ENCODE measurements at regions of chr10 and their contacts with region 1.

Region 1: DNA sequence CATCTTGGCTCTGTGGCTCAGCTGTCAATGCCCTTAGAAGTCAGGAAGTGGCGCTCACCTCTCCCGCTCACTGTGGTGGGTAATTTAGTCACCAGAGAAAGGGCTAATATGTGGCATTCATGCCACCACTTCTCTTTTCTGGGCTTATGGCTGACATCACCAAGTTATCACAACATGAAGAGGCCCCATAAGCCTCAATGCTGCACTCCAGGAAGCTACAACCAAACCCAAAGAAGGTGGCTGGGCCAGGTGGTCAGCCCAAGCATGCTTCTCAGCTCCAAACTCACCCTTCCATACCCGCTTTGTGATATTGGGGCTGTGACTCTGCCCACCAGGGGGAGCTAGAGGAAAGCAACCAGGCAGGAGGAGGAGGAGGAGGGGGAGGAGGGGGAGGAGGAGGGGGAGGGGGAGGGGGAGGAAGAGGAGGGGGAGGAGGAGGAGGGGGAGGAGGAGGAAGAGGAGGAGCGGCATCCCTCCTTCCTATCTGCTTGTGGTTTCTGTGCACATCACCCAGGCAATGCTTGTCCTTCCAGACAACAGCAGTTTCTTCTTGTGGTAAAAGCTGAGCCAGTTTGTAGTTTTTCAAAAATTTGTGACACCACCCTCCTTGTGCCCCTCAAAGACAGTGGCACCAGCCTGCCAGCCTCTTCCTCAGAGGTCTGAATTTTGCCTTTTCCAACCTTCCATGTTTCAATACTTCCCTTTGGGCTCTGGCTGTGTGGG is 42.1 kb downstream of the CYP26A1 start:
- DNase-seq: peak; percentile 88
- ATAC-seq: peak; percentile 93
- H3K4me3 Mint-ChIP-seq: no peak overlapping the region
- H3K27ac Mint-ChIP-seq: no peak overlapping the region
- H3K4me1 Mint-ChIP-seq: peaks cover 12% of the 10 kb centered on the region
- H3K27me3 Mint-ChIP-seq: peaks cover 15% of the 10 kb centered on the region
- CTCF ChIP-seq: peak; percentile 47; the same call in 1 of the 2 replicates

Region 2: DNA sequence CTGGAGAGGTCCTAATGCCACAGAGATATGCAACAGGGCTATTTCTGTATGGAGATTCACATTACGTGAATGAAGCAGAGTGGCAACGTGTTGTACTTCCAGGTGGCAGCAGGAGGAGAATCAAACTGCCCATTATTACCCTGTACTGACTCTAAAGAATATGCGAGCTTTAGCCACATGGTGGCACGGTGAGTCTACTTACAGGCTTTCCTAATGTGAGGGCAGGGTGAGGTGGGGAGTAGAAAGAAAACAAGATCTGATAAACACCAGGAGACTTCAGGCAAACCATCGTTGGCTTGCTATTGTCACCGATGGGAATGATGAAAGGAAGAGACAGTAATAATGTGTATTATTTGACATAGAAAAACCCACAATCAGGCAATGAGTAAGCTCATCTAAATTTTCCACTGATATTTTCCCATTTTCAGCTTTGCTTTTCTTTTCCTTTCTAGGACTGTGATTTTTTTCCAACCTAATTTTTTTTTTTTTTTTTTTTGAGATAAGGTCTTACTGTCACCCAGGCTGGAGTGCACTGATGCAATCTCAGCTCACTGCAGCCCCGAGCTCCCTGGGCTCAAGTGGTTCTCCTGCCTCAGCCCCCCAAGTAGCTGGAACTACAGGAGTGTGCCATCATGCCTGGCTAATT is 1027.9 kb before region 1 on chr10:
- CTCF ChIA-PET with region 1: no interaction called
- POLR2A ChIA-PET with region 1: no interaction called
- DNase-seq: peak; percentile 75
- ATAC-seq: peak; percentile 100
- H3K4me3 Mint-ChIP-seq: no peak overlapping the region
- H3K27ac Mint-ChIP-seq: peak overlapping the region; percentile 84
- H3K4me1 Mint-ChIP-seq: peaks cover 23% of the 10 kb centered on the region
- H3K27me3 Mint-ChIP-seq: no peaks in the 10 kb centered on the region
- CTCF ChIP-seq: peak; percentile 48

Region 3: GRCh38 chr10:93126484-93127052 is 10.7 kb after region 1 on chr10:
- CTCF ChIA-PET with region 1: interaction called, 20 read pairs
- POLR2A ChIA-PET with region 1: no interaction called
- DNase-seq: peak; percentile 34
- ATAC-seq: no peak
- H3K4me3 Mint-ChIP-seq: no peak overlapping the region
- H3K27ac Mint-ChIP-seq: no peak overlapping the region
- H3K4me1 Mint-ChIP-seq: peaks cover 2% of the 10 kb centered on the region; the same call in 1 of the 2 replicates
- H3K27me3 Mint-ChIP-seq: peaks cover 6% of the 10 kb centered on the region; the same call in 1 of the 2 replicates
- CTCF ChIP-seq: peak; percentile 84

Region 4: GRCh38 chr10:93206651-93207050 is 90.8 kb after region 1 on chr10:
- CTCF ChIA-PET with region 1: interaction called, 17 read pairs
- POLR2A ChIA-PET with region 1: no interaction called
- DNase-seq: peak; percentile 59
- ATAC-seq: peak; percentile 100
- H3K4me3 Mint-ChIP-seq: no peak overlapping the region
- H3K27ac Mint-ChIP-seq: no peak overlapping the region
- H3K4me1 Mint-ChIP-seq: peaks cover 4% of the 10 kb centered on the region; the same call in 1 of the 2 replicates
- H3K27me3 Mint-ChIP-seq: no peaks in the 10 kb centered on the region
- CTCF ChIP-seq: no peak

Region 5: GRCh38 chr10:93280699-93281366 is 165.0 kb after region 1 on chr10:
- CTCF ChIA-PET with region 1: interaction called, 25 read pairs
- POLR2A ChIA-PET with region 1: no interaction called
- DNase-seq: peak; percentile 89
- ATAC-seq: peak; percentile 90
- H3K4me3 Mint-ChIP-seq: peak overlapping the region; percentile 42
- H3K27ac Mint-ChIP-seq: peak overlapping the region; percentile 100
- H3K4me1 Mint-ChIP-seq: peaks cover 59% of the 10 kb centered on the region
- H3K27me3 Mint-ChIP-seq: peaks cover 52% of the 10 kb centered on the region
- CTCF ChIP-seq: no peak

Region 6: DNA sequence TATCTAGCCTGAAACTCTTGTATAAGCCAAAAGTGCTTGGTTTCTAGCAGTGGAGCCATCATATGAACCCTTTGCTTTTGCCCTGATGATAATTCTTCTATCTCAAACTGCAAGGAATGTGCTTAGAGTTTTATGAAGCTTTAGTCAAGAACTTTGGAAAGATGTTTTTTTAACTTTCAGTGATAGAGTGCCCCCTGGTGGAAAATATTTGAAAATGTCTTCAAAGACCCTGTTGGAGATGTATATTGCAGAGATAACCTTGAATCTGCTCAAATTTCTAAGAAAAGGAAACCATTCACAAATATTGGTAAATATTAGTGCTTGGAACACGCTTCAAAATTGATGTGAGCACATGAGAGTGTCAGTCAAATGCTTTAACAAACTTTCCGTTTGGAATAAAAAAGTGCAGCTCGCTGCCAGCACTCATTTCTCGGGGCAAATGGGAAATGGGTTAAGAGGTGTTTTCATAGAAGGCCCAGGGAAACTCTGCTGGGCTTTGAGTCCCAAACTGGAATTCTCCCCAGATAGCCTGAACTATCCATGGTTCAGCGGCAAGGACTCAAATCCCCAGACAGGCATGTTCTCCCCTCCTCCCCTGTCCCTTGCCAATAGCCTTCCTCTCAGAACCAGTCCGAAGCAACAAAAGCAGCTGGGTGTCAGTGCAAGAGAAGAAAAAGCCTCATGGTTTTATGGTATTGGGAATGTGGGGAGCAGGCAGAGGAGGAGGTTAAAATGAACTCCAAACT is 237.0 kb after region 1 on chr10:
- CTCF ChIA-PET with region 1: interaction called, 47 read pairs
- POLR2A ChIA-PET with region 1: no interaction called
- DNase-seq: no peak
- ATAC-seq: peak; percentile 70
- H3K4me3 Mint-ChIP-seq: no peak overlapping the region
- H3K27ac Mint-ChIP-seq: no peak overlapping the region
- H3K4me1 Mint-ChIP-seq: peaks cover 15% of the 10 kb centered on the region
- H3K27me3 Mint-ChIP-seq: no peaks in the 10 kb centered on the region; the same call in 1 of the 2 replicates
- CTCF ChIP-seq: peak; percentile 54

Measured in WTC11 (cell line).